ENCODE measurements at regions of chr16 and their contacts with region 1.

Region 1: GRCh38 chr16:30510376-30510938 is 15.9 kb downstream of the ZNF768 start:
- DNase-seq: no peak
- H3K4me3 Mint-ChIP-seq: no peak overlapping the region
- H3K27ac Mint-ChIP-seq: peak overlapping the region; percentile 34
- H3K4me1 Mint-ChIP-seq: peaks cover 7% of the 10 kb centered on the region
- H3K27me3 Mint-ChIP-seq: no peaks in the 10 kb centered on the region

Region 2: DNA sequence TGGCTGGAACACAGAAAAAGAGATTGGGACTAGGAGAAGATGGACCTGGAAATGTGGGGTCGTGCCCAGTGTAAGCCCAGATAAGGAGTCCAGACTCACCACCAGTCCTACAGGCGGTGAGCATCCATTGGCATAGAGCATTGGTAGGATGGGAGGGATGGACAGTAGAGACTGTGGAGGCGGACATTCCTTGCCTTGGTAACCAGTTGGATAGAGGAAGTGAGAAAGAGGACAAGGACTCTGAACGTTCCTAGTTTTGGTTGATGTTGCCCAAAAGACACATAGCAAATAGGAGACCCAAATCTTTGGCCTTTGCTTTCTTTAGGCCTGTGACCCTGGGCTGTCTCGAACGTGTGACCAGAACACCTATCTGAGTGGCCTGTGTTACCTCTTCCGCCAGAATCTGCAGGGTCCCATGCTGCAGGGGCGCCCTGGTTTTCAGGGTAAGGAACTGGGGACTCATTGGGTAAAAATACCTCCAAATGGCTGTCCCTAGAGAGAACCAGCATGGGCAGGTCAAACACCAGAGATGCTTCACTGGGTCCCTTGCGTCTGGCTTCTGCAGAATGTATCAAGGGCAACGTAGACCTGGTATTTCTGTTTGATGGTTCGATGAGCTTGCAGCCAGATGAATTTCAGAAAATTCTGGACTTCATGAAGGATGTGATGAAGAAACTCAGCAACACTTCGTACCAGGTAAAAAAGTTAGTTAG is 31.5 kb before region 1 on chr16:
- intact Hi-C with region 1: loop called (anchors 5 kb)
- DNase-seq: no peak
- H3K4me3 Mint-ChIP-seq: no peak overlapping the region
- H3K27ac Mint-ChIP-seq: peak overlapping the region; percentile 71
- H3K4me1 Mint-ChIP-seq: peaks cover 68% of the 10 kb centered on the region
- H3K27me3 Mint-ChIP-seq: no peaks in the 10 kb centered on the region